OCI-LY7 (cell line): ENCODE measurements at regions of chr7 and their contacts with region 1.

Region 1: GRCh38 chr7:2109936-2110585 is 122.7 kb downstream of the MAD1L1 start:
- DNase-seq: peak; percentile 92
- H3K4me3 ChIP-seq: peak overlapping the region; percentile 64
- H3K27ac ChIP-seq: peak overlapping the region; percentile 79
- H3K4me1 ChIP-seq: peaks cover 40% of the 10 kb centered on the region
- CTCF ChIP-seq: no peak

Region 2: GRCh38 chr7:2060701-2061100 is 49.4 kb before region 1 on chr7:
- CTCF ChIA-PET with region 1: no interaction called
- POLR2A ChIA-PET with region 1: no interaction called
- intact Hi-C with region 1: no loop called
- DNase-seq: no peak
- H3K4me3 ChIP-seq: no peak overlapping the region
- H3K27ac ChIP-seq: no peak overlapping the region
- H3K4me1 ChIP-seq: peaks cover 4% of the 10 kb centered on the region
- CTCF ChIP-seq: no peak

Region 3: GRCh38 chr7:2232766-2233520 is 122.9 kb after region 1 on chr7 and contains the start of gene MAD1L1:
- CTCF ChIA-PET with region 1: no interaction called
- POLR2A ChIA-PET with region 1: no interaction called
- intact Hi-C with region 1: loop called (anchors 2 kb)
- DNase-seq: peak; percentile 92
- H3K4me3 ChIP-seq: peak within 1 kb of the TSS; percentile 89
- H3K27ac ChIP-seq: peak within 1 kb of the TSS; percentile 19
- H3K4me1 ChIP-seq: peaks cover 37% of the 10 kb centered on the region
- CTCF ChIP-seq: no peak
- total RNA-seq, gene MAD1L1: 65.3 and 125 TPM in 2 replicates